ENCODE measurements at regions of chr2 and their contacts with region 1.

Region 1: GRCh38 chr2:210072922-210073509 is 70.6 kb downstream of the RPE start:
- DNase-seq: peak; percentile 39
- H3K4me3 ChIP-seq: no peak overlapping the region
- H3K27ac ChIP-seq: no peak overlapping the region
- H3K4me1 ChIP-seq: no peaks in the 10 kb centered on the region
- H3K27me3 ChIP-seq: no peaks in the 10 kb centered on the region
- CTCF ChIP-seq: peak; percentile 70 to 75

Region 2: GRCh38 chr2:209977386-209978239 is 95.4 kb before region 1 on chr2:
- CTCF ChIA-PET with region 1: no interaction called
- dilution Hi-C with region 1: no loop called
- in situ Hi-C with region 1: no loop called
- intact Hi-C with region 1: loop called (anchors 5 kb)
- DNase-seq: peak; percentile 9
- H3K4me3 ChIP-seq: no peak overlapping the region
- H3K27ac ChIP-seq: no peak overlapping the region
- H3K4me1 ChIP-seq: no peaks in the 10 kb centered on the region
- H3K27me3 ChIP-seq: no peaks in the 10 kb centered on the region
- CTCF ChIP-seq: peak; percentile 38 to 51

Region 3: DNA sequence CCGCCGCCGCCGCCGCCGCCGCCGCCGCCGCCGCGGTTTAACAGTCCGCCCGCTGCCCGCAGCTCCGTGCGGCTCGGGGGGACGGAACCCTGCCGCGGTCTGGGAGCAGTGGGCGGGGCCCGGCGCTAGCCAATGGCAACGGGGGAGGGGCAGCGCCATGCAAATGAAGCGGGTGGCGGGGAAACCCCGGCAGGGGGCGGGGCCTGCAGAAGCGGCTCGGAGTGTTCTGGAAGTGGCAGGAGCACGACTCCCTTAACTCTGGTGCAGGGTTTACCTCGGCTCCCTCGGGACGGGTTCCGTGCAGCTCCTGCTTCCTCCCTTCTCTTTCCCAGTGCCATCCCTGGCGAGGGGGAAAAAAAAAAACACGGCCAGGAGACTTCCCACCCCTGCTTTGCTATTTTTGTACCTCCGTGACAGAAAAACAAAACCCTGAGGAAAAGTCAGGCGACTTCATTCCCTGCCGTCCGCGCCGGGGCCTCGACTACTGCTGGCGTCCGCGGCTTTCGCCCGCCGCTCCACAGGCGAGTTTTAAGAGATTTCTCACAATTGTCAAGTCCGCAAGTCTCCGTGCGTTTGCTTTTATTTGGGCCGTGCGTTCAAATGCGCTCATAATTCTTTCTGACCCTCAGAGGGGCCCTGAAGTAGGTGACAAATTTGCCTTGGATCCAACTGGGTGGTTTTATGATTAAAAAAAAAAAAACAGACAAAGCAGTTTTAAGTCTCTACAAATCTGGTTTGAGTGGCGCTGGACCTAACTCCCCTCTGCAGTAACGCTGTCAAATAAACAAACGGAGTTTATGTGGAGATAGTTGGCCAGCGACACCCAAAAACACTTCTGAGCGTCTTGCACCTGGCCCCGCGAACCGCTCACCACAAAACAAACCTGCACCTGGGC is 98.5 kb after region 1 on chr2 and contains the start of gene KANSL1L:
- CTCF ChIA-PET with region 1: no interaction called
- dilution Hi-C with region 1: no loop called
- in situ Hi-C with region 1: no loop called
- intact Hi-C with region 1: loop called (anchors 2 kb)
- DNase-seq: peak; percentile 93
- H3K4me3 ChIP-seq: peak within 1 kb of the TSS; percentile 89 to 96 (median 89)
- H3K27ac ChIP-seq: peak within 1 kb of the TSS; percentile 99
- H3K4me1 ChIP-seq: peaks cover 7% of the 10 kb centered on the region
- H3K27me3 ChIP-seq: no peaks in the 10 kb centered on the region
- CTCF ChIP-seq: no peak
- total RNA-seq, gene KANSL1L: 6.1 to 12.2 TPM

Region 4: DNA sequence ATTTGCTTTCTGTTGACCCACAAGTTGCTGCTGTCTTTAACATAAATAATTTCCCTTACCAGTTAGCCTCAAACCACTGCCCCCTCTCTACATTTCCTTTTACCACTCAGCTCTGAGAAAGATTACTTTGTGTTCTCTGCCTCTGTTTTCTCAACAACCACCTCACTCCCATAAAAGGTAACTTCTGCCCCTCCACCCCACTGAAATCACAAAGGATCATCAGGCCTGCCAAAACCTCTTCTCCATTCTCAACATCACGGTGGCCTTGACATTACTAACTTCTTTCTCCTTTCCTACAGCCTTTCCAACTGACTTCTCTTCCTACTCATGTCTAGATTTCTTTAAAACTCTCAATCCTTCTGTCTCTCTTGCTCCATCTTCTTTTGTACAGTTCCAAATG is 142.1 kb after region 1 on chr2:
- CTCF ChIA-PET with region 1: no interaction called
- dilution Hi-C with region 1: no loop called
- in situ Hi-C with region 1: no loop called
- intact Hi-C with region 1: no loop called
- DNase-seq: no peak
- H3K4me3 ChIP-seq: no peak overlapping the region
- H3K27ac ChIP-seq: no peak overlapping the region
- H3K4me1 ChIP-seq: no peaks in the 10 kb centered on the region
- H3K27me3 ChIP-seq: no peaks in the 10 kb centered on the region
- CTCF ChIP-seq: no peak

Measured in mammary epithelial cell (primary cell).